AG04450 (cell line): ENCODE measurements at regions of chr4 and their contacts with region 1.

Region 1: DNA sequence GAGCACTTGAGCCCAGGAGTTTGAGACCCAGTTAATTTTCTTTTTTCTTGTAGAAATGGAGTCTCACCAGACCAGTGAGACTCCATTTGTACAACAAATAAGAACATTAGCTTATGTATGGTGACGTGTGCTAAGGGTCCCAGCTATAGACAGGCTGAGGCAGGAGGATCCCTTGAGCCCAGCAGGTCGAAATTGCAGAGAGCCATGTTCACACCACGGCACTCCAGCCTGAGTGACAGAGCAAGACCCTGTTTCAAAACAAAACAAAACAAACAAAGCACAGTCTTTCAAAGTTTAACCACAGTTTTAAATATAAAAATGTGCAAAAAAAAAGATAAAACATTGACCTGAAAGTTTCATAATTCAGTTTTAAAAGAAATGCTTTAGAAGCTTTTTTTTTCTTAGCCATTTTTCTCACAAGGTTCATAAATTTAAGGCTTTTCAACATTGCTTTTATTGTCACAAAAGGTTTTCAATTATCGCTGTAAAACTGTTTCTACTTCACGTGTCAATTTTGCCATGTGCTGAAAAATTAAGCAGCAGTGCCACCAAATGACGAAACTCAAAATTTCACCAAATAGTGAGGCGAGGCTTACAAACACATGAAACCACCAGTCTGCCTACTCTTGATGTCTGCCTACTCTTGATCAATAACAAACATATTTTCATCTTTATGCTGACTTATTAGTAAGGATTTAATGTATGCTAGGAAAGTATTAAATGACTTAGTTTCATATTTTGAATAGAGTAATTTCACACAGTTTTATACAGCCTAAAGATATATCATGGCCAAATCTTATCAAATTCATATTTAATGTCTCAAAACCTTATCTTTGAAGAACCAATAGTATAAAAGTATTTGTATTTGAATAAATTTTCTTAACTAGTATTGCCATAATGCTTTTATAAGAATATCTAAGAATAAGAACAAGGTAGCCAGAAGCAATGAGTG is 126.3 kb downstream of the NEK1 start:
- DNase-seq: no peak
- H3K4me3 ChIP-seq: no peak overlapping the region
- H3K27ac ChIP-seq: no peak overlapping the region
- H3K27me3 ChIP-seq: no peaks in the 10 kb centered on the region
- CTCF ChIP-seq: peak; percentile 57

Region 2: GRCh38 chr4:169010125-169011023 is 475.7 kb before region 1 on chr4 and contains the start of gene CBR4:
- CTCF ChIA-PET with region 1: interaction called, 22 read pairs
- POLR2A ChIA-PET with region 1: interaction called, 4 read pairs
- DNase-seq: peak; percentile 96
- H3K4me3 ChIP-seq: peak within 1 kb of the TSS; percentile 83
- H3K27ac ChIP-seq: peak within 1 kb of the TSS; percentile 92
- H3K27me3 ChIP-seq: no peaks in the 10 kb centered on the region
- CTCF ChIP-seq: peak; percentile 43
- polyA plus RNA-seq, gene CBR4: 4.2 and 4.5 TPM in 2 replicates

Region 3: GRCh38 chr4:169024762-169025161 is 461.3 kb before region 1 on chr4:
- CTCF ChIA-PET with region 1: interaction called, 23 read pairs
- POLR2A ChIA-PET with region 1: no interaction called
- DNase-seq: peak; percentile 11
- H3K4me3 ChIP-seq: no peak overlapping the region
- H3K27ac ChIP-seq: no peak overlapping the region
- H3K27me3 ChIP-seq: no peaks in the 10 kb centered on the region
- CTCF ChIP-seq: peak; percentile 68

Region 4: GRCh38 chr4:169256101-169256612 is 229.9 kb before region 1 on chr4:
- CTCF ChIA-PET with region 1: interaction called, 12 read pairs
- POLR2A ChIA-PET with region 1: interaction called, 3 read pairs
- DNase-seq: no peak
- H3K4me3 ChIP-seq: no peak overlapping the region
- H3K27ac ChIP-seq: no peak overlapping the region
- H3K27me3 ChIP-seq: no peaks in the 10 kb centered on the region
- CTCF ChIP-seq: no peak

Region 5: DNA sequence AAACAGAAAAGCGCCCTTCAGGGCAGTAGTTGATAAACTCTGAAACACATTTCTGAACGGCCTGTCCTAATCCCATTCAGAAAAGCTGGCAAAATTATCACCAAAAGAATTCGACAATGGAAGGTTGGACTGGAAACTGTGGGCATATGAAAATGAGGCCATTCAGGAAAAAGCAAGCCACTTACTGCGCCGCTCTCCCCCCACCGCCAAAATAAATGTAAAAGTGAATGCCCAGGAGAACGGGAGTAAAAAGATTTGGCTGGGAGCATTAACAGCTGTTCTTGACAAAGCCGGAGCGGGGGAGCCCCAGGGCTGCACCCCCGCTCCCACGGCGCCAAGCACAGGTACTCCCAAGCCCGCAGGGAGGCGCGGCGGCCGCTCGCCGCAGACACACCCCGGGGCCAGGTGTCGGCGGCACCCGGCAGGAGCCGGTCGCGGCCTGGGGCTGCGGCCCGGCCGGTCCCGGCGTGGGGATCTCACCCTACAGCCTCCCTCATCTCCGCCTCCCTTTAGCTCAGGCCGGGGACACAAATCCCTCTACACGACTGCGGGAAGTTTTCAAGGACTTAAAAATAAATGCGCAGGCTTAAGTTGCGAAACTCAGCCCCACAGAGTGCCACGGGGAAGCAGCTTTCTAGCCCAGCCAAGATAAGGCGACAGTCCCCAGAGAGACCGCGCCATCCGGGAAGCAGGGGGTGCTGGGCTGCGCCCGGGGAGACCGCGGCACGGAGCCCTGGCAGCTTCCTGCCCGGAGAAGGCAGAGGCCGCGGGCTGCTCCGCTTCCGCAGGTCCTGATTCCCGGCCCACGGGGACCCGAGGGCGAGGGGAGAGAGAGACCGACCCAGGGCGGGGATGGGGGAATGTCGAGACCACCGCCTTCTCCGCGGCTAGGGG is 215.9 kb before region 1 on chr4:
- CTCF ChIA-PET with region 1: interaction called, 13 read pairs
- POLR2A ChIA-PET with region 1: no interaction called
- DNase-seq: no peak
- H3K4me3 ChIP-seq: peak overlapping the region; percentile 91
- H3K27ac ChIP-seq: peak overlapping the region; percentile 89
- H3K27me3 ChIP-seq: no peaks in the 10 kb centered on the region
- CTCF ChIP-seq: 0 out of 2 replicates have a peak, but pooled peaks have one; percentile 4

Region 6: GRCh38 chr4:169540774-169541173 is 54.7 kb after region 1 on chr4:
- CTCF ChIA-PET with region 1: no interaction called
- POLR2A ChIA-PET with region 1: no interaction called
- DNase-seq: no peak
- H3K4me3 ChIP-seq: no peak overlapping the region
- H3K27ac ChIP-seq: no peak overlapping the region
- H3K27me3 ChIP-seq: no peaks in the 10 kb centered on the region
- CTCF ChIP-seq: no peak

Region 7: GRCh38 chr4:170529748-170530722 is 1044.0 kb after region 1 on chr4:
- CTCF ChIA-PET with region 1: no interaction called
- POLR2A ChIA-PET with region 1: no interaction called
- DNase-seq: no peak
- H3K4me3 ChIP-seq: no peak overlapping the region
- H3K27ac ChIP-seq: no peak overlapping the region
- H3K27me3 ChIP-seq: no peaks in the 10 kb centered on the region
- CTCF ChIP-seq: no peak